Activated naive CD4-positive, alpha-beta T cell treated with anti-CD3 and anti-CD28 coated beads, Interleukin-2, amount 10 ng/mL, durations not matched to agents 7 days and 5 days (primary cell): ENCODE measurements at regions of chr3 and their contacts with region 1.

Region 1: GRCh38 chr3:138923531-138923994 is 23.4 kb downstream of the FOXL2 start:
- DNase-seq: peak; percentile 89
- H3K4me3 Mint-ChIP-seq: no peak overlapping the region
- H3K27ac Mint-ChIP-seq: no peak overlapping the region
- H3K4me1 Mint-ChIP-seq: no peaks in the 10 kb centered on the region
- H3K27me3 Mint-ChIP-seq: peaks cover 29% of the 10 kb centered on the region

Region 2: GRCh38 chr3:138417559-138417982 is 506.0 kb before region 1 on chr3:
- CTCF ChIA-PET with region 1: interaction called, 42 read pairs
- DNase-seq: peak; percentile 76
- H3K4me3 Mint-ChIP-seq: no peak overlapping the region
- H3K27ac Mint-ChIP-seq: no peak overlapping the region
- H3K4me1 Mint-ChIP-seq: no peaks in the 10 kb centered on the region
- H3K27me3 Mint-ChIP-seq: peaks cover 44% of the 10 kb centered on the region

Region 3: GRCh38 chr3:138479438-138479863 is 444.1 kb before region 1 on chr3:
- CTCF ChIA-PET with region 1: interaction called, 21 read pairs
- DNase-seq: peak; percentile 66
- H3K4me3 Mint-ChIP-seq: no peak overlapping the region
- H3K27ac Mint-ChIP-seq: no peak overlapping the region
- H3K4me1 Mint-ChIP-seq: no peaks in the 10 kb centered on the region
- H3K27me3 Mint-ChIP-seq: peaks cover 4% of the 10 kb centered on the region

Region 4: DNA sequence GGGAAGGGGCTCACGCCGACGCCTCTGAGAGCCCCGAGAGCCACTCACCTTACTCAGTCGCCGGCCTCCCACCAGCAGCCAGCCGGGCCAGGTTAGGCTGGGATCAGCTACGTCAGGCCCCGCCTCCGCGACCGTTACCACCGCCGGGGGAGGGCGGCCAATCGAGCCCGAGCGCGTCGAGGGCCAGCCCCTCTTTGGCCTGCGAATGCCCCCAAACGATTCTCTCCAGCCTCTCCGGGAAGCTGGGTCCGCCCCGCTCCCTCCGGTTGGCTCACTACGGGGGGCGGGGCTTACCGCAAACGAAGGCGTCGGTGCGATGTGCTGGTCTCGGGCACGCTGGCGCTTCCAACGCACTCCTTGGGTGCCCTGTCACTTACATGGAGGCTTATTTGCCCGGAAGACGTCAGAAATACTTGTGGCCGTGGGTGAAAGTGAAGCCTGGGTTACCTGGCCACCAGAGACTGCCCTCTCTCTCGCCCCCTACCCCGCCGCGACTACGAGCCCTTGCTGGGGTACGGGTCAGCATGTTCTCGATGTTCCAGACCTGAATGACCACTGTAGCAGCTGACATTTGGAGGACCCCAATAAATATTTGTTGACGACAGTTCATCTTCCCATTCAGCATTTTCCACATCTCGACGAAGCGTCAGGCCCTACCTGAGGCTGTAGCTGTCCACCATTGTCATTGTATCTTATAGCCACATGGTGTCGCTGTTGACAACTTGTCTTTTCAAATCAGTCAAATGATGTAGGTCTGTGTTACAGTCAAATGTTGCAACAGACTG is 329.2 kb before region 1 on chr3 and contains the start of gene CEP70:
- CTCF ChIA-PET with region 1: interaction called, 34 read pairs
- DNase-seq: peak; percentile 94
- H3K4me3 Mint-ChIP-seq: peak within 1 kb of the TSS; percentile 73
- H3K27ac Mint-ChIP-seq: peak within 1 kb of the TSS; percentile 93
- H3K4me1 Mint-ChIP-seq: peaks cover 13% of the 10 kb centered on the region
- H3K27me3 Mint-ChIP-seq: no peaks in the 10 kb centered on the region

Region 5: DNA sequence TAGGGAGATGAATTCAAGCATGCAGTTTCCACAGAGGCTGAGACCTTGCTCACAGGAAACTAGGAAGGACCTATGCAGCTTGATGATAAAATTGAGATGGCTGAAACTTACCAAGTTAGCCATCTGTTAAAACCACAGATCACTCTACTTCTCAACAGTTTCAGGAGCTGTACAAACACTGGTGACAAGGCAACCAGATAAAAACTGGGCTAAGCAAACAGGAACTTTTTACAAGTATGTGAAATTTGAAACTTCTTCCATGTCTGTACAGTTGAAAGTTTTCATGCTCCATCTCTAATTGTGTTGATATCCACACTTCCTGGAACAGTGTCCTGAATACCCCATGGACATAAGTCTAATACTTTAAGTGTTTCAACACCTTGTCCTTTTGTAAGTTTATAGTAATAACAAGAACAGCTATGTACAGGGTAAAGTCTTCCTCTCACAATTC is 236.8 kb before region 1 on chr3:
- CTCF ChIA-PET with region 1: interaction called, 17 read pairs
- DNase-seq: no peak
- H3K4me3 Mint-ChIP-seq: no peak overlapping the region
- H3K27ac Mint-ChIP-seq: no peak overlapping the region
- H3K4me1 Mint-ChIP-seq: peaks cover 6% of the 10 kb centered on the region
- H3K27me3 Mint-ChIP-seq: no peaks in the 10 kb centered on the region

Region 6: DNA sequence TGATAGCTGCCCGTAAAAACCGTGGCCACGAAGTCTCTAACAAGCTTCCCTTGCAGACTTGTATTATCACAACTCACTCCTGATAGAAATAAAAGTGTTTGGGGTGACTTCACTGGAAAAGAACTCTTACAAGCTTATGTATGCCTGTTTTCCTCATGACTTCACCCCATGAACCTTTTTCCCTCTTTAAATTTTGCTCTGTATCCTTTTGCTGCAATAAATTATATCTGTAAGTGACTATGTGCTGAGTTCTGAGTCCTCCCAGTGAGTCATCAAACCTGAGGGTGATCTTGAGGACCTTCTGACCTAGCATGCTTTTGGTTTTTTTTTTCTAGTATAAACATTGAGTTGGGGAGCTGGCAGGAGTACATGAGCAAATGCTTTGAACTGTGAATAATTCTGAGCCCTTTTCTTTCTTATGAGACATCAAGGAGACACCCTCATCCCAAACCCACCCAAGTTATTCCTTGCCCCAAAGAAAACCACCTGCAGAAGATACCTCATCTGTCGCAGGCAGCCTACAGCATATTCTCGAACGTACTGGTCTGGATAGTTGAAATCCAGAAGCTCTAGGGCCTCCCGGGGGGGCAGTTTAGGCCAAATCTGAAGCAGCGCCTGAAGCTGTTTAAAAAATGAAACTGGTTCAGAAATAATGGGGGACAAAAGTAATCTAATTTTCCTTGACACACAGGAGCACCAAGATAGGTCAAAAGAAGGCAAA is 229.1 kb before region 1 on chr3:
- CTCF ChIA-PET with region 1: interaction called, 170 read pairs
- DNase-seq: no peak
- H3K4me3 Mint-ChIP-seq: no peak overlapping the region
- H3K27ac Mint-ChIP-seq: no peak overlapping the region
- H3K4me1 Mint-ChIP-seq: no peaks in the 10 kb centered on the region
- H3K27me3 Mint-ChIP-seq: no peaks in the 10 kb centered on the region

Region 7: GRCh38 chr3:138935848-138936740 is 12.5 kb after region 1 on chr3:
- CTCF ChIA-PET with region 1: interaction called, 70 read pairs
- DNase-seq: peak; percentile 73
- H3K4me3 Mint-ChIP-seq: peak overlapping the region; percentile 54
- H3K27ac Mint-ChIP-seq: peak overlapping the region; percentile 64
- H3K4me1 Mint-ChIP-seq: peaks cover 30% of the 10 kb centered on the region
- H3K27me3 Mint-ChIP-seq: peaks cover 93% of the 10 kb centered on the region